ENCODE measurements at regions of chr11 and their contacts with region 1.

Region 1: DNA sequence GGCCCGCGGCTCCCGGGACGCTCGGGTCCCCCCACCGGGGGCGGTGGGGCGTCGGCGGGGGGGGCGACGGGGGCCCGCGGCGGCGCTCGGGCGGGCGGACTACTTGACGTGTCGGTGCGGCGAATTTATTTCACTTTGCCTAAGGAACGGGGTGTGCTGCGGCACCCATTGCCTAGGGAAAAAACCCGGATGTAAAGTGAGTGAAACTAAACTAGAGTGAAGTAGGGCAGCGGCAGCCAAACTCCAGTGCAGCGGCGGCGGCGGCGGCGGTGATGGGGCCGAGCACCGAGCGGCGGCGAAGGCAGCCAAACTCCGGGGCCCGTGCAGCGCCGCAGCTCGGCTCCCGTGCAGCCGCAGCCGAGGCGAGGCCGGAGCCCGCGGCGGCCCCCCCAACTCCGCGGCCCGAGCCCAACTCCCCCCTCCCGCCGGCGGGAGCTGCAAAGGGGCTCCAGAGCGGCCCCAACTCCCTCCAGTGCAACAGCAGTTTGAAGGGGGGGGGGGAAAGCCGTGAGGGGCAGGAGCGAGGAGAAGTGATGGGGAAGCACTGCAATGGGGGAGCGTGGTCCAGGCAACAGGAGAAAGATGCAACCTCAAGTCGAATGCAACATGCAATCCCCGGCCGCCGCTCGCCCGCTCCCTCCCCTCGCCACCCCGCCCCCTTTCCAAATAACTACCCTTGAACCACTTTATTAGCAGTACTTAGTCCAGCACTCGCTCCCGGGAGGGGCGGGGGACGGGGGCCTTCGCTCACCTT is 647 bp upstream of the PHF21A start:
- DNase-seq: peak; percentile 94
- H3K4me3 Mint-ChIP-seq: peak overlapping the region; percentile 84
- H3K27ac Mint-ChIP-seq: peak overlapping the region; percentile 82
- H3K4me1 Mint-ChIP-seq: peaks cover 36% of the 10 kb centered on the region
- H3K27me3 Mint-ChIP-seq: no peaks in the 10 kb centered on the region

Region 2: GRCh38 chr11:45846974-45847910 is 274.7 kb before region 1 on chr11 and contains the start of gene CRY2:
- intact Hi-C with region 1: loop called (anchors 2 kb)
- DNase-seq: peak; percentile 99
- H3K4me3 Mint-ChIP-seq: peak within 1 kb of the TSS; percentile 85
- H3K27ac Mint-ChIP-seq: peak within 1 kb of the TSS; percentile 90
- H3K4me1 Mint-ChIP-seq: peaks cover 41% of the 10 kb centered on the region
- H3K27me3 Mint-ChIP-seq: peaks cover 7% of the 10 kb centered on the region
- total RNA-seq, gene CRY2: 22.1 and 22.5 TPM in 2 replicates

Region 3: GRCh38 chr11:45964911-45965389 is 157.0 kb before region 1 on chr11:
- intact Hi-C with region 1: loop called (anchors 5 kb)
- DNase-seq: peak; percentile 86
- H3K4me3 Mint-ChIP-seq: no peak overlapping the region
- H3K27ac Mint-ChIP-seq: no peak overlapping the region
- H3K4me1 Mint-ChIP-seq: no peaks in the 10 kb centered on the region
- H3K27me3 Mint-ChIP-seq: no peaks in the 10 kb centered on the region

Region 4: GRCh38 chr11:46006418-46007070 is 115.4 kb before region 1 on chr11:
- intact Hi-C with region 1: no loop called
- DNase-seq: peak; percentile 83
- H3K4me3 Mint-ChIP-seq: no peak overlapping the region
- H3K27ac Mint-ChIP-seq: no peak overlapping the region
- H3K4me1 Mint-ChIP-seq: no peaks in the 10 kb centered on the region
- H3K27me3 Mint-ChIP-seq: no peaks in the 10 kb centered on the region

Region 5: GRCh38 chr11:46238967-46239800 is 117.3 kb after region 1 on chr11:
- intact Hi-C with region 1: loop called (anchors 2 kb)
- DNase-seq: peak; percentile 96
- H3K4me3 Mint-ChIP-seq: peak overlapping the region; percentile 75
- H3K27ac Mint-ChIP-seq: peak overlapping the region; percentile 32
- H3K4me1 Mint-ChIP-seq: peaks cover 41% of the 10 kb centered on the region
- H3K27me3 Mint-ChIP-seq: peaks cover 22% of the 10 kb centered on the region

Region 6: GRCh38 chr11:47213985-47214564 is 1092.2 kb after region 1 on chr11:
- intact Hi-C with region 1: loop called (anchors 10 kb)
- DNase-seq: peak; percentile 93
- H3K4me3 Mint-ChIP-seq: peak overlapping the region; percentile 99
- H3K27ac Mint-ChIP-seq: peak overlapping the region; percentile 100
- H3K4me1 Mint-ChIP-seq: peaks cover 37% of the 10 kb centered on the region
- H3K27me3 Mint-ChIP-seq: no peaks in the 10 kb centered on the region

Measured in activated CD4-positive, alpha-beta T cell treated with anti-CD3 and anti-CD28 coated beads, Interleukin-2, amount 10 ng/mL, durations not matched to agents 24 days and 14 days (primary cell).